MCF 10A (cell line): ENCODE measurements at regions of chr2 and their contacts with region 1.

Region 1: DNA sequence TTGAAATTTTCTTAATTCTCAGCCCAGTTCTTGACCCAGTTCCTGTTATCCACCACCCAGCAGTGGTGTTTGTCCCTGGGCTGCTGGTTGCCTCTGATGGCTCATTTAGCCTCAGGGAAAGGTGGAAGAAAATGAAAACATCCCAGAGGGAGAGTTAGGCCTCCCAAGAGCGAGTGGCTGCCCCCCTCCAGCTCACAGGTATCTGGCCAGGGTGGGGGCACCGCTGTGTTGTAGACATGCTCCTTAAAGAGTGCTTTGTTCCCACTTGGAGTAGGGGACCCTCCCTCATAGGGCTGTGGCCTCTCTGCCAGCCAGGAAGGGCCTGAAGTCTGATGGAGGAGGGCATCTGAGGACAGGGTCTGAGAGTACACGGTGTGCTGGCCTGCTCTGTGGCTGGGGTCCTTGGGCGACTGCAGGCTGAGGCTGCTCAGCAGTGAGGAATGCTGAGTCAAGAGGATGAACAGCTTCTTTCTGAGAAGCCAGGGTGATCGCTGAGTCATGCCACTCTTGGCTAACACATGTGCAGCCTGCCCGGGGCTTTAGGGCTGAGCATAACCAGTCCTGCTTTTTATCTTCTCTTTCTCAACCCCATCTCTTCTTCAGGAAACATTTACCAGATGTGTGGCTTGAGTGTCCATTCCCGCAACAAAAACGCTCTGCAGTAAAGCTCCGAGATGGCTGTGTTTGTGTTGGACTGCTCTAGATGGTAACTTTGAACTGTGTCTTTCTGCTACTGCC is 72.3 kb downstream of the IL1R2 start:
- DNase-seq: peak; percentile 97
- H3K4me3 Mint-ChIP-seq: no peak overlapping the region
- H3K27ac Mint-ChIP-seq: no peak overlapping the region
- H3K4me1 Mint-ChIP-seq: peaks cover 50% of the 10 kb centered on the region
- H3K27me3 Mint-ChIP-seq: no peaks in the 10 kb centered on the region
- CTCF ChIP-seq: no peak

Region 2: GRCh38 chr2:102033031-102033749 is 30.9 kb before region 1 on chr2:
- CTCF ChIA-PET with region 1: no interaction called
- POLR2A ChIA-PET with region 1: interaction called, 11 read pairs
- intact Hi-C with region 1: no loop called
- DNase-seq: peak; percentile 77
- H3K4me3 Mint-ChIP-seq: peak overlapping the region; percentile 54
- H3K27ac Mint-ChIP-seq: peak overlapping the region; percentile 86
- H3K4me1 Mint-ChIP-seq: peaks cover 21% of the 10 kb centered on the region
- H3K27me3 Mint-ChIP-seq: no peaks in the 10 kb centered on the region
- CTCF ChIP-seq: no peak

Region 3: DNA sequence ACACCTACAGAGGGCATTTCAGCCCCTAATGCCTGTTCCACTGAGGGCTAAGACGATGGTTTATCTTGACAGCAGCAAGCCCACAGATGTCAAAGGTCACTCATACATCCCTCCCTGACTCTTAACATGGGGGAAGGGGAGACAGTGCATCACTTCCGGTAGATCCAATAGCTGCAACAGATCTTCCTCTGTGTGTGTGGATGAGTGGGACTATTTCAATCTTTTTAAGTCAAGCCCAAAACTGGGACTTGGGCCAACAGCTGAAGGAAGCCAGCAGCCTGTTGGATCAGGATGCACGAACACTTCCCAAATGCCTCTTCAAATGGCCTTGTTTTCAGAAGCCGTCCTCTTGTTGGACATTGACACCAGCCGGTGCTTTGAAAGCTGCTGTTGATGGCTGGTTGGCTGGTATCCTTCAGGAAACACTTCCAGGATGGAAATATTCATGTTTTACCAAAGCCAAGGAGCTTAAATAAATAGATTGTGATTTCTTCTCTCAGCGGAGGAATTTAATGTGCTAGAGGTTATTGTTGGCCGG is 13.2 kb before region 1 on chr2:
- CTCF ChIA-PET with region 1: interaction called, 4 read pairs
- POLR2A ChIA-PET with region 1: interaction called, 41 read pairs
- intact Hi-C with region 1: no loop called
- DNase-seq: peak; percentile 28
- H3K4me3 Mint-ChIP-seq: no peak overlapping the region
- H3K27ac Mint-ChIP-seq: peak overlapping the region; percentile 82
- H3K4me1 Mint-ChIP-seq: peaks cover 31% of the 10 kb centered on the region
- H3K27me3 Mint-ChIP-seq: no peaks in the 10 kb centered on the region
- CTCF ChIP-seq: no peak

Region 4: DNA sequence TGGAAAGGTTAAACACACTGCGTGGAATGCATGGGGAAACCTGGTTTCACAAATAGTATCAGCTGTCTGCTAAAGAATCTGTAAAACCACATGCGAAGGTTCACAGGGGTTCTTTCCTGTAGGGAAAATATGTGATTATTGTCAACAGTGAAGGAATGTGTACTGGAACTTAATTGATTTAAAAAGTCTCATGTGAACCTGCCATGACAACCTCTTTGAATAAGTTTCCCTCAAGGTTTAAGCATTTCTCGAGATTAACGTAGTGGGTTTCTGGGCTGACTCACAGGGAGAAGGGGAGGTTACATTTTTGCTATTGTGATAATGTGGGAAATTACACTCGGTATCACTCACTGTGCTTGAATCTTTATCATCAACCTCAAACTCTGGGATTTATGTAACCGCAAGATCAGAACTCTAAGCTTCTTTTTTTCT is 50.2 kb after region 1 on chr2:
- CTCF ChIA-PET with region 1: no interaction called
- POLR2A ChIA-PET with region 1: no interaction called
- intact Hi-C with region 1: no loop called
- DNase-seq: no peak
- H3K4me3 Mint-ChIP-seq: no peak overlapping the region
- H3K27ac Mint-ChIP-seq: no peak overlapping the region
- H3K4me1 Mint-ChIP-seq: no peaks in the 10 kb centered on the region
- H3K27me3 Mint-ChIP-seq: no peaks in the 10 kb centered on the region
- CTCF ChIP-seq: no peak

Region 5: GRCh38 chr2:102129951-102130646 is 66.0 kb after region 1 on chr2:
- CTCF ChIA-PET with region 1: no interaction called
- POLR2A ChIA-PET with region 1: no interaction called
- intact Hi-C with region 1: no loop called
- DNase-seq: no peak
- H3K4me3 Mint-ChIP-seq: no peak overlapping the region
- H3K27ac Mint-ChIP-seq: no peak overlapping the region
- H3K4me1 Mint-ChIP-seq: peaks cover 28% of the 10 kb centered on the region
- H3K27me3 Mint-ChIP-seq: no peaks in the 10 kb centered on the region
- CTCF ChIP-seq: no peak